ENCODE measurements at regions of chr7 and their contacts with region 1.

Region 1: GRCh38 chr7:35605760-35606159 is 89.2 kb downstream of the HERPUD2 start:
- DNase-seq: peak; percentile 43
- H3K4me3 ChIP-seq: no peak overlapping the region
- H3K27ac ChIP-seq: no peak overlapping the region
- H3K4me1 ChIP-seq: no peaks in the 10 kb centered on the region
- H3K27me3 ChIP-seq: no peaks in the 10 kb centered on the region
- CTCF ChIP-seq: no peak

Region 2: GRCh38 chr7:35565927-35566326 is 39.8 kb before region 1 on chr7:
- CTCF ChIA-PET with region 1: no interaction called
- dilution Hi-C with region 1: no loop called
- in situ Hi-C with region 1: no loop called
- intact Hi-C with region 1: no loop called
- DNase-seq: peak; percentile 40
- H3K4me3 ChIP-seq: no peak overlapping the region
- H3K27ac ChIP-seq: no peak overlapping the region
- H3K4me1 ChIP-seq: no peaks in the 10 kb centered on the region
- H3K27me3 ChIP-seq: no peaks in the 10 kb centered on the region
- CTCF ChIP-seq: no peak

Region 3: DNA sequence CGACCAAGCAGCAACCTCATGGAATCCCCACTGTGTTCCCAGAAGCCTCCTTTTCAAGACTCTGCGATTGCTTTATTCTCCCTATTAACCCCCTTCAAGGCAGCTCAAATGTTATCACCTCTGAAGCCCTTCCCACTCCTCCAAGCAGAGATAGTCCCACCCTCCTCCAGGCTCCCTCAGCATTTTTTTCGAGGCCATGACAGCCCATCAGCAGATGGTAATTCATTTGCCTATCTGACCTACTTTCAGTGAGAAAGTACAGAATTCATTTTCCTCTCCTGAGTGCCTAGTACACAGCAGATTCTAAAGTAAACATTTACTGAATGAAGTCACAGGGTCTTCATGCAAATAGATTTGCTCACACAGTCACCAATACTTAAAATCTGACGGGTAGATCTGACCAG is 41.4 kb after region 1 on chr7:
- CTCF ChIA-PET with region 1: no interaction called
- dilution Hi-C with region 1: no loop called
- in situ Hi-C with region 1: no loop called
- intact Hi-C with region 1: loop called (anchors 2 kb)
- DNase-seq: no peak
- H3K4me3 ChIP-seq: no peak overlapping the region
- H3K27ac ChIP-seq: no peak overlapping the region
- H3K4me1 ChIP-seq: no peaks in the 10 kb centered on the region
- H3K27me3 ChIP-seq: no peaks in the 10 kb centered on the region
- CTCF ChIP-seq: no peak

Measured in mammary epithelial cell (primary cell).